ENCODE measurements at regions of chr12 and their contacts with region 1.

Region 1: GRCh38 chr12:132986001-132986912 is at the start of gene ZNF26:
- DNase-seq: peak; percentile 86 to 98 (median 90)

Region 2: DNA sequence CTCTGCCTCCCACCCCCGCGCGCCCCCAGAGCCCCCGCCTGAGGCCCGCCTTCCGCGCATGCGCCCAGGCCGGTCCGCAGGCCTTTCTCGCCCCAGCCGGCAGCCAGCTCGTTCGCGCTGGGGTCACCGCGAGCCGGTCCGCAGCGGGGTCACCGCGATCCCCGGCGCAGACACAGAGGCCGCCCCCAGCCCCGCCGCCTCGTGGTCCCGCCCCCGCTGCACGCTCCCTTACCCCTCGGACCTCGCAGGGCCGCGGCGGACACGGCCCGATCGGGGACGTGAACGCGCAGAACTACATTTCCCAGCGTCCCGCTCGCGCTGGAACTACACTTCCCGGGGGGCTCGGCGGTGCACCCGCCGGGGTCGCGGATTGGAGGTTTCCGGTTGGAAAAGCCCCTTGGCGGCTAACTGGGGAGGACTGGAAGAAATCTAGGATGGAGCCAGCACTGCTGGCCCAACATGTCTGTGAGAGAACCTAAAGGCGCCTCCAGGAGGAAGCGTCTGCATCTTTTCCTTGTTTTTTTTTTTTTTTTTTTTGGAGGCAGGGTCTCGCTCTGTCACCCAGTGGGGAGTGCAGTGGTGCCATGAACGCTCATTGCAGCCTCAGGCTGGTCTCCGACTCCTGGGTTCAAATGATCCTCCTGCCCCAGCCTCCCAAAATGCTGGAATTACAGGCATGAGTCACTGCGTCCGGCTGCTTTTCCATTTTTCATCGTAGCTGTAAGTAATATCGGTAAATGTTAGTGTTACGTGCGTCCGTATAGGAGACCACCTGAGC is 30.1 kb before region 1 on chr12 and contains the start of gene ZNF605:
- intact Hi-C with region 1: loop called (anchors 1 kb)
- DNase-seq: peak; percentile 84 to 99 (median 92)

Region 3: GRCh38 chr12:133037207-133038005 is 51.1 kb after region 1 on chr12 and contains the start of gene ZNF84:
- intact Hi-C with region 1: loop called (anchors 1 kb)
- DNase-seq: peak; percentile 91 to 99 (median 94)

Measured in posterior cingulate gyrus (tissue), 11 donors.